CD4-positive, alpha-beta T cell (primary cell): ENCODE measurements at regions of chr15 and their contacts with region 1.

Region 1: GRCh38 chr15:75625542-75626347 is at the start of gene SNUPN:
- DNase-seq: peak; percentile 86 to 97 (median 92)
- ATAC-seq: peak; percentile 92
- H3K4me3 ChIP-seq: peak within 1 kb of the TSS; percentile 100
- H3K4me3 Mint-ChIP-seq: peak within 1 kb of the TSS; percentile 92
- H3K27ac ChIP-seq: peak within 1 kb of the TSS; percentile 95
- H3K27ac Mint-ChIP-seq: peak within 1 kb of the TSS; percentile 90
- H3K4me1 ChIP-seq: peaks cover 31% of the 10 kb centered on the region
- H3K4me1 Mint-ChIP-seq: peaks cover 29% of the 10 kb centered on the region
- H3K27me3 ChIP-seq: no peaks in the 10 kb centered on the region
- H3K27me3 Mint-ChIP-seq: no peaks in the 10 kb centered on the region
- CTCF ChIP-seq: no peak
- total RNA-seq, gene SNUPN: 10.0 to 11.6 TPM

Region 2: GRCh38 chr15:74460871-74461846 is 1164.6 kb before region 1 on chr15 and contains the start of gene UBL7:
- CTCF ChIA-PET with region 1: no interaction called
- POLR2A ChIA-PET with region 1: no interaction called
- intact Hi-C with region 1: loop called in 1 of 2 experiments (anchors 10 kb)
- DNase-seq: peak; percentile 91 to 97 (median 96)
- ATAC-seq: peak; percentile 98
- H3K4me3 ChIP-seq: peak within 1 kb of the TSS; percentile 92
- H3K4me3 Mint-ChIP-seq: peak within 1 kb of the TSS; percentile 97
- H3K27ac ChIP-seq: peak within 1 kb of the TSS; percentile 61 to 62
- H3K27ac Mint-ChIP-seq: peak within 1 kb of the TSS; percentile 84
- H3K4me1 ChIP-seq: peaks cover 19% of the 10 kb centered on the region
- H3K4me1 Mint-ChIP-seq: peaks cover 53% of the 10 kb centered on the region
- H3K27me3 ChIP-seq: no peaks in the 10 kb centered on the region
- H3K27me3 Mint-ChIP-seq: no peaks in the 10 kb centered on the region
- CTCF ChIP-seq: peak; percentile 15
- total RNA-seq, gene UBL7: 14.3 to 17.1 TPM

Region 3: GRCh38 chr15:75327005-75327404 is 298.7 kb before region 1 on chr15:
- CTCF ChIA-PET with region 1: no interaction called
- POLR2A ChIA-PET with region 1: no interaction called
- intact Hi-C with region 1: no loop called
- DNase-seq: no peak
- ATAC-seq: no peak
- H3K4me3 ChIP-seq: no peak overlapping the region
- H3K4me3 Mint-ChIP-seq: no peak overlapping the region
- H3K27ac ChIP-seq: no peak overlapping the region
- H3K27ac Mint-ChIP-seq: no peak overlapping the region
- H3K4me1 ChIP-seq: no peaks in the 10 kb centered on the region
- H3K4me1 Mint-ChIP-seq: no peaks in the 10 kb centered on the region
- H3K27me3 ChIP-seq: no peaks in the 10 kb centered on the region
- H3K27me3 Mint-ChIP-seq: no peaks in the 10 kb centered on the region
- CTCF ChIP-seq: no peak

Region 4: GRCh38 chr15:75578948-75579920 is 46.5 kb before region 1 on chr15 and contains the start of gene PTPN9:
- CTCF ChIA-PET with region 1: interaction called, 9 read pairs
- POLR2A ChIA-PET with region 1: interaction called, 35 read pairs
- intact Hi-C with region 1: loop called in 1 of 2 experiments (anchors 10 kb)
- DNase-seq: peak; percentile 46 to 82 (median 64)
- ATAC-seq: peak; percentile 82
- H3K4me3 ChIP-seq: peak within 1 kb of the TSS; percentile 79
- H3K4me3 Mint-ChIP-seq: peak within 1 kb of the TSS; percentile 97
- H3K27ac ChIP-seq: peak within 1 kb of the TSS; percentile 50 to 70
- H3K27ac Mint-ChIP-seq: peak within 1 kb of the TSS; percentile 82
- H3K4me1 ChIP-seq: peaks cover 22% of the 10 kb centered on the region
- H3K4me1 Mint-ChIP-seq: peaks cover 26% of the 10 kb centered on the region
- H3K27me3 ChIP-seq: no peaks in the 10 kb centered on the region
- H3K27me3 Mint-ChIP-seq: no peaks in the 10 kb centered on the region
- CTCF ChIP-seq: peak; percentile 66
- total RNA-seq, gene PTPN9: 8.1 to 8.2 TPM

Region 5: DNA sequence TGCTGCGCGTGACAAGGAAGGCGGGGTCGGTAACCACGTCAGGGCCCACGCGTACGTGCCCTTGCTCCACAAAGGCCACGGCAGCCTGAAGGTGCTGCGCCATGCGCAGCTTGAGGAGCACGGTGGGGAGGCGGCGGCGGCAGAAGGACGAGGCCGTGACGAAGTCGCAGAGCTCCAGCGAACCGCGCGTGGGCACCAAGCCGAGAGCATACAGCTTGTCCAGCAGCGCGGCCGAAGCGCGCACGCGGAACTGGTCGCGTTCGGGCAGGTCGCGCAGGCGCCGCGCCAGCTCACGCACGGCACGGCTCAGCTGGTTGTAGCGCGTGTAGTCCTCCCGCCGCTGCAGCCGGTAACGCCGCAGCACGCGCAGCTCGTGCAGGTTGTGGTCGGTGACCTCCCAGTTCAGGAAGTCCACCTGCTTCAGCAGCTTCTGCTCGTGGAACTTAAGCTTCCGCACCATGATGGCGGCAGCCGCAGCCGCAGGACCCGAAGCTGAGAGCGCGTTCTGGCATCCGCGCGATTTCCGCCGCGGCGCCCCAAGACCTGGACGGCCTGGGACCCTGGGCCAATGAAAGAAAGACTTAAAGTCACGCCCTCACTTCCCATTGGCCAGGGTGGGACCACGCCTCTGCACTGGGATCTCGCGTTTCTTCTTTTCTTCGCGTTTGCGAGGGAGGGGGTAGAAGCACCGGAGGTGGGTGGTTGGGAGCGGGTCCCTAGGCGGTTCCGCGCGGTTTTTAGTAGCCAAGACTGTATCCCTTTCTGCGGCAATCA is 14.2 kb after region 1 on chr15 and contains the start of gene IMP3:
- CTCF ChIA-PET with region 1: interaction called, 18 read pairs
- POLR2A ChIA-PET with region 1: interaction called, 231 read pairs
- intact Hi-C with region 1: loop called (anchors 1 kb)
- DNase-seq: peak; percentile 84 to 97 (median 90)
- ATAC-seq: peak; percentile 90
- H3K4me3 ChIP-seq: peak within 1 kb of the TSS; percentile 95
- H3K4me3 Mint-ChIP-seq: peak within 1 kb of the TSS; percentile 89
- H3K27ac ChIP-seq: peak within 1 kb of the TSS; percentile 92
- H3K27ac Mint-ChIP-seq: peak within 1 kb of the TSS; percentile 85
- H3K4me1 ChIP-seq: peaks cover 56% of the 10 kb centered on the region
- H3K4me1 Mint-ChIP-seq: peaks cover 35% of the 10 kb centered on the region
- H3K27me3 ChIP-seq: no peaks in the 10 kb centered on the region
- H3K27me3 Mint-ChIP-seq: no peaks in the 10 kb centered on the region
- CTCF ChIP-seq: no peak
- total RNA-seq, gene IMP3: 48.4 to 50.4 TPM

Region 6: GRCh38 chr15:77419836-77420609 is 1794.3 kb after region 1 on chr15 and contains the start of gene PEAK1:
- CTCF ChIA-PET with region 1: no interaction called
- POLR2A ChIA-PET with region 1: no interaction called
- intact Hi-C with region 1: loop called in 1 of 2 experiments (anchors 10 kb)
- DNase-seq: peak; percentile 99 to 100 (median 100)
- ATAC-seq: peak; percentile 99
- H3K4me3 ChIP-seq: peak within 1 kb of the TSS; percentile 70
- H3K4me3 Mint-ChIP-seq: peak within 1 kb of the TSS; percentile 99
- H3K27ac ChIP-seq: peak within 1 kb of the TSS; percentile 86 to 87
- H3K27ac Mint-ChIP-seq: peak within 1 kb of the TSS; percentile 96
- H3K4me1 ChIP-seq: peaks cover 14% of the 10 kb centered on the region
- H3K4me1 Mint-ChIP-seq: peaks cover 54% of the 10 kb centered on the region
- H3K27me3 ChIP-seq: no peaks in the 10 kb centered on the region
- H3K27me3 Mint-ChIP-seq: no peaks in the 10 kb centered on the region
- CTCF ChIP-seq: no peak
- total RNA-seq, gene PEAK1: 9.2 to 11.0 TPM